Vagina (tissue), 2 donors: ENCODE measurements at regions of chr2 and their contacts with region 1.

Region 1: DNA sequence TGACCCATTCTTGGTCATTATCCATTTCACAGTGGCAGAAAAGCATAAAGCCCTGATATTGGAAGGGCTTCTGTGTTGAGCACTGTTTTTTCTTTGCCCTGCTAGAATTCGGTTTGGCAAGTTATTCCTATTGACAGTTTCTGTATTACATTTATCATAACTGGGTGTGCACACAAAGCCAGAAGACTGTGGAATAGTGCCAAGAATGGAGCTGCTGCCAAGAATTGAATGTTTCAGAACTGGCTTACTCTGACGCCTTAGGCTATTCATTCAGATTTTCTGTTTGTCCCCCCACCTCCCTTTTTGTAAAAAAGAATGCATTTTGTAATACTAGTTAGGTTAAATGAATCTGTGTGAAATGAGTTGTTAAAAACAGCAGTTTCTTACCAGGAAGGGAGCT is 12.7 kb downstream of the KDM3A start:
- DNase-seq: no peak
- H3K4me3 ChIP-seq: no peak overlapping the region
- H3K27ac ChIP-seq: no peak overlapping the region
- H3K4me1 ChIP-seq: peaks cover 26% of the 10 kb centered on the region
- H3K27me3 ChIP-seq: no peaks in the 10 kb centered on the region
- CTCF ChIP-seq: no peak
- POLR2A ChIP-seq: no peak

Region 2: DNA sequence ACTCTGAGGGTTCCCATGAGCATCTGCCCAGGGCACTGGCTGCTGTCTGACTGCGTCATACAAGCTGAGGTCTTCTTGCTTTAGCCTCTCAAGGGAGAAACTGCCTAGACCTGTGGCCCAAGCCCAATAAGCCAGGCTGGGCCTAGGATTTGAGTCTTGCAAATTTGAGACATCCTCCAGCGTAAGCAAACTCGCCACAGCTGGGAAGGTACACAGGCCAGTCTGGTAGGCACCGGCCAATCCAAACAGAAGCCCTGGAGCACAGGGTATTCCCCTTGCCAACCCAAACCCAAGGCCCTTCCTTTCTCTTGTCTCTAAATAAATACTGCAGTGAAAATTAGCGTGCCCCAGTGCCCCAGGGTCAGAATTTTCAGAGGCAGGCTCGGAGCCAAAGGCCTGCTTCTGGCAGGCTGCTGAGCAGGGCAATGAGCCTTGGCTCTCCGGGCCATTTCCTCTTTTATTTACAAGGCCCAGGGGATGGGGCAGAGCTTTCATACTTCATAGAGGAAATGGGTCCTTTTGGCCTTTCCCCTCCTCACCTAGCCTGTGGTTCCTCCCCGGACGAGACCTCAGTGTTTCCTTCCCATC is 381.5 kb before region 1 on chr2:
- intact Hi-C with region 1: no loop called
- DNase-seq: no peak
- H3K4me3 ChIP-seq: no peak overlapping the region
- H3K27ac ChIP-seq: peak overlapping the region; percentile 42
- H3K4me1 ChIP-seq: peaks cover 11% of the 10 kb centered on the region
- H3K27me3 ChIP-seq: no peaks in the 10 kb centered on the region
- CTCF ChIP-seq: no peak
- POLR2A ChIP-seq: no peak

Region 3: DNA sequence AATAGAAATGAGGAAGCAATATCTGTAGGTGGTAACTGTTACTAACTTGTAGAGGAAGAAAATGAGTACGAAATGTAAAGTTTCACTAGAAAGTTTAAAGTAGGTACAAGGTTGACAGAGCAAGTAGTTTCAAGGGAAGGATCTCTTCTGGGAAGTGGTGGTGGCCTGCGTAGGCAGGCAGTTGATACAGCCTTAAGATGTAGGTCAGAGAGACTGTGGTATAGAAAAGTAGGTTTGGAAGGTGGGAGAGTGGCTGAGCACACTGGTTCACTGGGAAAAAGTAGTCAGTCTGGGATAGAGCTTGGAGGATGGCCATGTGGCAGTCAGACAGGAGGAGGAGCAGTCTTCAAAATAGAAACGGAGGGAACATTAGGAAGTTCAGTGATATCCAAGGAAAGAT is 10.8 kb after region 1 on chr2:
- intact Hi-C with region 1: loop called (anchors 2 kb)
- DNase-seq: no peak
- H3K4me3 ChIP-seq: no peak overlapping the region
- H3K27ac ChIP-seq: no peak overlapping the region
- H3K4me1 ChIP-seq: no peaks in the 10 kb centered on the region
- H3K27me3 ChIP-seq: no peaks in the 10 kb centered on the region
- CTCF ChIP-seq: no peak
- POLR2A ChIP-seq: no peak